WTC11 (cell line): ENCODE measurements at regions of chr11 and their contacts with region 1.

Region 1: DNA sequence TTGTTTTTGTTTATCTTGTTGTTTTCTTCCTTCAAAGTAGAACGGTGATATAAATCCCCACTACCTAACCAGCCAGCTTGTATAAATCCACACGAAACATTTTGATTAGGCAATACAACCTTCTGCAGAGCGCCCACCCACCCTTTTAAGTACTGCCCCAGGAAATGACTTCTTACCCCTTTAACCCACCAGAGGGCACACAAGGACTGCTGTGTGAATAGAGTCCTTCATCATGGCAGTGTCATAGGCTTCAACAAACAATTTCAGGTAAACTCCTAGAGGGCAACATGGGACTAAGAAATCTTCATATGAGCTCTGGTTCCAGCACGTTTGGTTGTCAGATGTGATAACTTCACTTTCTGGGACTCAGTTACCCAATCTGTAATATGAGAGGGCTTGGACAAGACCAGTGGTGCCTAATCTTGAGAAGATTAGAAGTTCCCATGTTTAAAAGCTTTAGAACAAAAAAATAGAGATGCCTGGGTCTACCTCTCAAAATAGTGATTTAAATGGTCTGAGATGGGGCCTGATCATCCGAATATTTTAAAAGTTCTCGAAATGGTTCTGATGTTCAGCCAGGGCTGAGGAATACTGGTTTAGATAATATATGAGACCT is 56.1 kb downstream of the PIWIL4 start:
- DNase-seq: peak; percentile 77
- ATAC-seq: peak; percentile 98
- H3K4me3 Mint-ChIP-seq: no peak overlapping the region
- H3K27ac Mint-ChIP-seq: no peak overlapping the region
- H3K4me1 Mint-ChIP-seq: peaks cover 23% of the 10 kb centered on the region
- H3K27me3 Mint-ChIP-seq: peaks cover 8% of the 10 kb centered on the region; the same call in 1 of the 2 replicates
- CTCF ChIP-seq: peak; percentile 79

Region 2: DNA sequence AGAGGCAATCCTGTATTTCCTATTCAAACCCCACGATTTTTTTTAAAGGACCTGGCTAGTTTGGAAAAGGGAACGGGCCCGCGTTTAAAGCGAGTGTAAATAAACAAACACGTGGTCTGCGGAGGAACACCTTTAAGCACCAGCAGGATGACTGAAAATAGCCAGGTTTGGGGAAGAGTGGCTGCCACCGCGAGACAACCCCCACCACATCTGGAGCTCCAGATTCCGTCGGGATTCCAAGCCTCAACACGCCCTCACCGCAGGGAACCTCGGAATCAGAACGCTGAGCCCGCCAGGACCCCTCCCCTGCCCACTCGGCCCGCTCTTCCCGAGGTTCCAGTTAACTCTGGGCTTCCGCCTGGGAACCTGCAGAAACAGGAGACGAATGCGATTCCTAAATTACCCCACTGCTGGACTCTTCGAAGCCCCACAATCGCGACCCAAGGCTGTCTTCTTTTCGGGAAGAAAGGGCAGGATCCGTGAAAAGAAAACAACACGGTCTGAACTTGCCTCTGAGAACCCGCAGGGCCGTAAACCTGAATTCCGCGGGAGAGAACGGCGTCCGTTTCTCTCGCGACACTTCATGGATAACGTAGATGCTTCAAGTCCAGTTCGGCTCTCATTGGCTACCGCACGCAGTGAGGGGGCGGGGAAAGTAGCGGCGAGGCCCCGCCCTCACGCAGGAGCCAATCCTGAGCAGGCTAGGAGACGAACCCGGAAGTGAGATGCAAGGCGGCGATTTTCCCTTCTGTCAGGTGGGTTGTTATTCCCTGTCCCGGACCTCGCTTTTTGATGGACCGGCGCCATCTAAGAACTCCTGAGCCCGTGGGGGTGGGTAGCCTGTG is 129.7 kb before region 1 on chr11 and contains the starts of genes ANKRD49 and MRE11:
- CTCF ChIA-PET with region 1: no interaction called
- POLR2A ChIA-PET with region 1: no interaction called
- DNase-seq: peak; percentile 98
- ATAC-seq: peak; percentile 98
- H3K4me3 Mint-ChIP-seq: peak within 1 kb of the TSS; percentile 95
- H3K27ac Mint-ChIP-seq: peak within 1 kb of the TSS; percentile 99
- H3K4me1 Mint-ChIP-seq: peaks cover 11% of the 10 kb centered on the region
- H3K27me3 Mint-ChIP-seq: no peaks in the 10 kb centered on the region
- CTCF ChIP-seq: no peak
- total RNA-seq, gene ANKRD49: 9.5 to 9.9 TPM (median 9.6 TPM) in 3 replicates
- total RNA-seq, gene MRE11: 34.3 to 38.2 TPM (median 37.8 TPM) in 3 replicates

Region 3: GRCh38 chr11:94656968-94657367 is 33.7 kb after region 1 on chr11:
- CTCF ChIA-PET with region 1: interaction called, 29 read pairs
- POLR2A ChIA-PET with region 1: no interaction called
- DNase-seq: no peak
- ATAC-seq: peak; percentile 51
- H3K4me3 Mint-ChIP-seq: peak overlapping the region; percentile 20
- H3K27ac Mint-ChIP-seq: peak overlapping the region; percentile 89
- H3K4me1 Mint-ChIP-seq: peaks cover 95% of the 10 kb centered on the region
- H3K27me3 Mint-ChIP-seq: no peaks in the 10 kb centered on the region
- CTCF ChIP-seq: no peak

Region 4: DNA sequence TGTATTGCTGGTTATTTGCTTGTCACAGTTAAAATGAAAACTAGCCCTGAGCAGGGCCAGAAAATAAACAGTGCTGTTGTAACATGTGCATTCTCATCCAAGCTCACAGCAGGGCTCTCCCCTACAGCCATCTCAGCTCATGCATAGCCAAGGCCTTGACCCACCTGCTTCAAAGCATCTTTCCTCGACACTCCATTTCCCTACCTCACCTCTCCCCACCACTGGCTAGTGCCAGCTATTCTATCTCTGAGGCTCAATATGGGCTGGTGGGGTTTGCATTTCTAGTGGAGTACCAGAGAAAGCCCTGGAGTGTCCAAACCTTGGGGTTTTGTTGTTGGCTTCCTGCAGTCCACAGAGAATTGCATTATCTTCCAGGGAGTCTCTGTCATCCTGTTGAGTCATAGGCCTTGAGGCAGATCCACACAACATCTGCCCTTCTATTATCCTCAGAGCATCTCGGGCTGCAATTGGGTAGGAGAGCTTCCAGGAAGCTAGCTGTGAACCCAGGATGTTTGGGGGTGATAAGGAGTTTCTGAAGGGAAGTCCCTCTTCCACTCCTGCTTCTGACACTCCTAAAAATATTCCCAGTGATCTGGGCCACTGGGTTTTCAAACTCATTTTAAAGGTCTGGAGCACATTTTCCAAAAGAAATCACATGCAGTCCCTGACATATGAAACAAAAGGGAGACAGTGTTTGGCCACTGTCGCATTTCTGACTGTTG is 108.8 kb after region 1 on chr11:
- CTCF ChIA-PET with region 1: interaction called, 16 read pairs
- POLR2A ChIA-PET with region 1: no interaction called
- DNase-seq: no peak
- ATAC-seq: peak; percentile 4
- H3K4me3 Mint-ChIP-seq: no peak overlapping the region
- H3K27ac Mint-ChIP-seq: peak overlapping the region; percentile 82
- H3K4me1 Mint-ChIP-seq: peaks cover 61% of the 10 kb centered on the region
- H3K27me3 Mint-ChIP-seq: peaks cover 8% of the 10 kb centered on the region; the same call in 1 of the 2 replicates
- CTCF ChIP-seq: no peak

Region 5: DNA sequence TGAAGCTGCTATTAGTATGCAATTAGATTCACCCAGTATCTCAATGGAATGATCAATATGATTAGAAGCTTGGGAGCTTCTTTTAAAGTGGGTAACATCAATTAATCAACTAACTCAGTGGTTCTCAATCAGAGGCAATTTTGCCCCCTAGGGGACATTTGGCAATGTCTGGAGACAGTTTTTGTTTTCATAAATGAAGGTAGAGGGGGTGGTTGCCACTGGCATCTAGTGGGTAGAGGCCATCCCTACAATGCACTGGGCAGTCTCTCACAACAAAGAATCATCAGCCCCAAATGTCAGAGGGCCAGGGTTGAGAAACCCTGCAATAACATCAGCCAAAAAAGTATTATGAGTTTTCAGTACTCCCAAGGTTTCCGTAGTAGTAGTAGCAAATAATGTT is 139.0 kb after region 1 on chr11:
- CTCF ChIA-PET with region 1: interaction called, 13 read pairs
- POLR2A ChIA-PET with region 1: no interaction called
- DNase-seq: no peak
- ATAC-seq: peak; percentile 35
- H3K4me3 Mint-ChIP-seq: no peak overlapping the region
- H3K27ac Mint-ChIP-seq: no peak overlapping the region
- H3K4me1 Mint-ChIP-seq: peaks cover 30% of the 10 kb centered on the region
- H3K27me3 Mint-ChIP-seq: peaks cover 19% of the 10 kb centered on the region
- CTCF ChIP-seq: no peak

Region 6: GRCh38 chr11:94786264-94787126 is 163.3 kb after region 1 on chr11:
- CTCF ChIA-PET with region 1: interaction called, 12 read pairs
- POLR2A ChIA-PET with region 1: no interaction called
- DNase-seq: peak; percentile 51
- ATAC-seq: peak; percentile 84
- H3K4me3 Mint-ChIP-seq: no peak overlapping the region
- H3K27ac Mint-ChIP-seq: no peak overlapping the region
- H3K4me1 Mint-ChIP-seq: peaks cover 63% of the 10 kb centered on the region
- H3K27me3 Mint-ChIP-seq: no peaks in the 10 kb centered on the region
- CTCF ChIP-seq: peak; percentile 66

Region 7: GRCh38 chr11:94973099-94973968 is 350.1 kb after region 1 on chr11 and contains the starts of genes CWC15 and KDM4D:
- CTCF ChIA-PET with region 1: interaction called, 10 read pairs
- POLR2A ChIA-PET with region 1: no interaction called
- DNase-seq: peak; percentile 92
- ATAC-seq: peak; percentile 99
- H3K4me3 Mint-ChIP-seq: peak within 1 kb of the TSS; percentile 99
- H3K27ac Mint-ChIP-seq: peak within 1 kb of the TSS; percentile 98
- H3K4me1 Mint-ChIP-seq: peaks cover 10% of the 10 kb centered on the region
- H3K27me3 Mint-ChIP-seq: no peaks in the 10 kb centered on the region
- CTCF ChIP-seq: no peak
- total RNA-seq, gene CWC15: 49.4 to 55.5 TPM (median 52.1 TPM) in 3 replicates
- total RNA-seq, gene KDM4D: 1.9 to 2.4 TPM (median 2.1 TPM) in 3 replicates